ENCODE measurements at regions of chr17 and their contacts with region 1.

Region 1: GRCh38 chr17:75904749-75905521 is at the start of gene MRPL38:
- DNase-seq: peak; percentile 97
- ATAC-seq: peak; percentile 96
- H3K4me3 ChIP-seq: peak within 1 kb of the TSS; percentile 40 to 83 (median 79)
- H3K4me3 Mint-ChIP-seq: peak within 1 kb of the TSS; percentile 91
- H3K27ac ChIP-seq: peak within 1 kb of the TSS; percentile 79 to 83
- H3K27ac Mint-ChIP-seq: peak within 1 kb of the TSS; percentile 90
- H3K4me1 ChIP-seq: peaks cover 3 to 17% of the 10 kb centered on the region in 2 donors
- H3K4me1 Mint-ChIP-seq: peaks cover 8% of the 10 kb centered on the region
- H3K27me3 ChIP-seq: no peaks in the 10 kb centered on the region
- H3K27me3 Mint-ChIP-seq: no peaks in the 10 kb centered on the region
- CTCF ChIP-seq: peak; percentile 99
- total RNA-seq, gene MRPL38: 127 and 139 TPM in 2 replicates

Region 2: GRCh38 chr17:75784473-75785015 is 120.4 kb before region 1 on chr17 and contains the start of gene UNK:
- CTCF ChIA-PET with region 1: interaction called, 4 read pairs
- POLR2A ChIA-PET with region 1: interaction called, 5 read pairs
- intact Hi-C with region 1: loop called (anchors 1 kb)
- DNase-seq: peak; percentile 99
- ATAC-seq: peak; percentile 75
- H3K4me3 ChIP-seq: peak within 1 kb of the TSS; percentile 75 to 83 (median 81)
- H3K4me3 Mint-ChIP-seq: peak within 1 kb of the TSS; percentile 96
- H3K27ac ChIP-seq: peak within 1 kb of the TSS; percentile 100
- H3K27ac Mint-ChIP-seq: peak within 1 kb of the TSS; percentile 100
- H3K4me1 ChIP-seq: peaks cover 42 to 49% of the 10 kb centered on the region in 2 donors
- H3K4me1 Mint-ChIP-seq: peaks cover 53% of the 10 kb centered on the region
- H3K27me3 ChIP-seq: no peaks in the 10 kb centered on the region
- H3K27me3 Mint-ChIP-seq: no peaks in the 10 kb centered on the region
- CTCF ChIP-seq: no peak
- total RNA-seq, gene UNK: 70.3 and 82.3 TPM in 2 replicates

Region 3: GRCh38 chr17:75827252-75828115 is 77.5 kb before region 1 on chr17:
- CTCF ChIA-PET with region 1: no interaction called
- POLR2A ChIA-PET with region 1: no interaction called
- intact Hi-C with region 1: no loop called
- DNase-seq: peak; percentile 79
- ATAC-seq: peak; percentile 83
- H3K4me3 ChIP-seq: peak overlapping the region in 4 of 5 experiments; percentile 27 to 47 (median 36)
- H3K4me3 Mint-ChIP-seq: peak overlapping the region; percentile 82
- H3K27ac ChIP-seq: peak overlapping the region; percentile 42 to 54
- H3K27ac Mint-ChIP-seq: peak overlapping the region; percentile 86
- H3K4me1 ChIP-seq: peaks cover 8 to 18% of the 10 kb centered on the region in 2 donors
- H3K4me1 Mint-ChIP-seq: peaks cover 18% of the 10 kb centered on the region
- H3K27me3 ChIP-seq: no peaks in the 10 kb centered on the region
- H3K27me3 Mint-ChIP-seq: no peaks in the 10 kb centered on the region
- CTCF ChIP-seq: peak; percentile 80

Region 4: DNA sequence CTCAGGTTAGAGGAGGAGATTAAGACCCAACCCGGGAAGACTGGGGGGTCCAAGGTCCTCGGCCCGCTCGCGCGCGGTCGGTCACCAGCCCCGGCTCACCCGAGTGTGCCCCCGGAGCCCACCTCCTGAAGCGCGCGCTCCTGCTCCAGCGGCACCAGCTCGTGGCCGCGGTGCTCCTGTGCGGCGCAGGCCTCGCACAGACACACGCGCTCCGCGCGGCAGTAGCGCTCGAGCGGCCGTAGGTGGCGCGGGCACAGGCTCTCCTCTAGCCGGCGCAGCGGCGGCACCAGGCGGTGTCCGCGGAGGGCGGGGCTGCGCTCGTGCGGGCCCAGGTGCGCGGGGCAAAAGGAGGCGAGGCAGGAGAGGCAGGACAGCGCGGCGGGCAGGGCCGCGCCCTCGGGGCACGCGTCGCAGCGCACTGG is 27.2 kb before region 1 on chr17:
- CTCF ChIA-PET with region 1: interaction called, 5 read pairs
- POLR2A ChIA-PET with region 1: interaction called, 13 read pairs
- intact Hi-C with region 1: loop called (anchors 2 kb)
- DNase-seq: peak; percentile 87
- ATAC-seq: peak; percentile 77
- H3K4me3 ChIP-seq: peak overlapping the region in 4 of 5 experiments; percentile 46 to 69 (median 52)
- H3K4me3 Mint-ChIP-seq: peak overlapping the region; percentile 90
- H3K27ac ChIP-seq: peak overlapping the region; percentile 44 to 55
- H3K27ac Mint-ChIP-seq: peak overlapping the region; percentile 91
- H3K4me1 ChIP-seq: peaks cover 30 to 39% of the 10 kb centered on the region in 2 donors
- H3K4me1 Mint-ChIP-seq: peaks cover 35% of the 10 kb centered on the region
- H3K27me3 ChIP-seq: peaks cover 0 to 7% (median 1%) of the 10 kb centered on the region in 4 experiments
- H3K27me3 Mint-ChIP-seq: peaks cover 4% of the 10 kb centered on the region
- CTCF ChIP-seq: peak; percentile 73

Region 5: DNA sequence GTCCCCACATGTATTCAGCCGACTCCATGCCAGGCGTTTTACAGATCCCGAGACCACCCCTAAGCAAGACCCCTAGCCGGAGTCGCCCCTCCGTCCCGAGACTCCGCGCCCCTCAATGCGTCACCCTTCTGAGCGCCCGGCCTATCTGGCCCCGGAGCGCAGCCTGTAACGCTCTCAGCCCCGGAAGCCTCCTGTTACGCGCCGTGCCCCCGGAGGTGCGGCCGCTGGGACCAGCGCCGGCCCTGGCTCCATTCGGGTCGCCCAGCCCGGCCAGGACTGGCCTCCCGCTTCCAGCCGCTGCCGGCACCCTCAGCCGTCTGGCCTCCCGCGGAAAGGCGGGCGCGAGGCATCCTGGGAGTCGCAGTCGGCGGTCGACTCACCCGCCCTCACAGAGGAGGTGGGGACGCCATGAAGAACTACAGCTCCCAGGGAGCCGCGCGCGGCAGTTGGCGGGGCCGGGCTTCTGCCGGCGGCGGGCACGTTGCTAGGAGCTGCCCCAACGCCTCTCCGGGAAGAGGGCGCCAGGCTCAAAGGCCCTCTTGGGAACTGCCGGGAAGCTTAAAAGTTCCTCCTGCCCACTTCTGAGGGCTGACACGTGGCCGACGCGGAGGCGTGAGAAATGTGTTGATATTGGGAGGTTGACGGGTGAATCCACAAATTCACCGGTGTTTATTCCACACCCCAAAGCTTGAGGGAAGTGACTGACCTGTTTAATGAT is 35.9 kb after region 1 on chr17 and contains the start of gene FBF1:
- CTCF ChIA-PET with region 1: interaction called, 4 read pairs
- POLR2A ChIA-PET with region 1: no interaction called
- intact Hi-C with region 1: loop called (anchors 1 kb)
- DNase-seq: peak; percentile 89
- ATAC-seq: peak; percentile 99
- H3K4me3 ChIP-seq: peak within 1 kb of the TSS; percentile 6 to 97 (median 81)
- H3K4me3 Mint-ChIP-seq: peak within 1 kb of the TSS; percentile 92
- H3K27ac ChIP-seq: peak within 1 kb of the TSS; percentile 47 to 82
- H3K27ac Mint-ChIP-seq: peak within 1 kb of the TSS; percentile 89
- H3K4me1 ChIP-seq: peaks cover 0 to 14% of the 10 kb centered on the region in 2 donors
- H3K4me1 Mint-ChIP-seq: peaks cover 12% of the 10 kb centered on the region
- H3K27me3 ChIP-seq: no peaks in the 10 kb centered on the region
- H3K27me3 Mint-ChIP-seq: no peaks in the 10 kb centered on the region
- CTCF ChIP-seq: no peak
- total RNA-seq, gene FBF1: 27.0 and 31.5 TPM in 2 replicates

Region 6: DNA sequence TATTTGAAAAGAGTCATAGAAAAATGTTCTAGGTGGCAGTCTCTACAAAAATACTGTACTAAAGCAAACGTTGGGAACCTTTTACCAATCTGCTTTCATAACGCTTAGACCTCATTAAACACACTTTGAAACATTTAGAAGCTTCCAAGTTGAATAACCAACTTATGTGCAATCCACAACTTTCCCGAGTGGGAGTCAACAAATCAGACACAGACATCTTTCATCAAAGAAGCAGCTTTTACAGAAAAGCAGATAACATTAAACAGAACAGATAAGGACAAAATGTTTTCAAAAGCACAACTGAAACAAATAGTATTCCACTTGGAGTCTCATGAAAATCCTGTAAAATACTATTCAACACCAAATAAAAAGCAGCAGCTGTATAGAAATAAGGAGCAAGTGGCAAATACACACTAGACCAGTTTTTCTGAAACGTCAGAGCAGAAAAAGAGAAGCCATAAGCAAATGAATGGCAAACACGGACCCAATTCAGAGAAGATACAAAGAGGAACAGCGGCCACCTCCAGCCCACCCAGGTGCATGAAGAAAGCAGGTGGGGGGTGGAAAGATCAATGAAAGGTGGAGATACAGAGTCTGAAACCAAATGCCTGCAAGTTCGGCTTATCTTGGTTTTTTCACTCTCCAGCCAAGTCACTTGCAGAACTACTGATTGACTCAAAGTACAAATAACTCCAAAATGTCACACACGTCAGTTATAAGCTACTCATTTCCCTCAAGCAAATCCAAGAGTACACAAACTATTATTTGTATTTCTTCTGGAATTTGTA is 54.3 kb after region 1 on chr17:
- CTCF ChIA-PET with region 1: no interaction called
- POLR2A ChIA-PET with region 1: no interaction called
- intact Hi-C with region 1: no loop called
- DNase-seq: no peak
- ATAC-seq: no peak
- H3K4me3 ChIP-seq: no peak overlapping the region
- H3K4me3 Mint-ChIP-seq: no peak overlapping the region
- H3K27ac ChIP-seq: no peak overlapping the region
- H3K27ac Mint-ChIP-seq: no peak overlapping the region
- H3K4me1 ChIP-seq: peaks cover 0 to 4% of the 10 kb centered on the region in 2 donors
- H3K4me1 Mint-ChIP-seq: peaks cover 3% of the 10 kb centered on the region
- H3K27me3 ChIP-seq: no peaks in the 10 kb centered on the region
- H3K27me3 Mint-ChIP-seq: no peaks in the 10 kb centered on the region
- CTCF ChIP-seq: no peak

Region 7: GRCh38 chr17:75978938-75979704 is 74.2 kb after region 1 on chr17 and contains the starts of genes ACOX1 and TEN1:
- CTCF ChIA-PET with region 1: interaction called, 6 read pairs
- POLR2A ChIA-PET with region 1: no interaction called
- intact Hi-C with region 1: loop called (anchors 1 kb)
- DNase-seq: peak; percentile 98
- ATAC-seq: peak; percentile 93
- H3K4me3 ChIP-seq: peak within 1 kb of the TSS; percentile 73 to 100 (median 87)
- H3K4me3 Mint-ChIP-seq: peak within 1 kb of the TSS; percentile 94
- H3K27ac ChIP-seq: peak within 1 kb of the TSS; percentile 92 to 97
- H3K27ac Mint-ChIP-seq: peak within 1 kb of the TSS; percentile 98
- H3K4me1 ChIP-seq: peaks cover 9 to 19% of the 10 kb centered on the region in 2 donors
- H3K4me1 Mint-ChIP-seq: peaks cover 44% of the 10 kb centered on the region
- H3K27me3 ChIP-seq: no peaks in the 10 kb centered on the region
- H3K27me3 Mint-ChIP-seq: no peaks in the 10 kb centered on the region
- CTCF ChIP-seq: peak; percentile 35
- total RNA-seq, gene ACOX1: 31.2 and 38.8 TPM in 2 replicates
- total RNA-seq, gene TEN1: 19.8 and 25.5 TPM in 2 replicates

Region 8: DNA sequence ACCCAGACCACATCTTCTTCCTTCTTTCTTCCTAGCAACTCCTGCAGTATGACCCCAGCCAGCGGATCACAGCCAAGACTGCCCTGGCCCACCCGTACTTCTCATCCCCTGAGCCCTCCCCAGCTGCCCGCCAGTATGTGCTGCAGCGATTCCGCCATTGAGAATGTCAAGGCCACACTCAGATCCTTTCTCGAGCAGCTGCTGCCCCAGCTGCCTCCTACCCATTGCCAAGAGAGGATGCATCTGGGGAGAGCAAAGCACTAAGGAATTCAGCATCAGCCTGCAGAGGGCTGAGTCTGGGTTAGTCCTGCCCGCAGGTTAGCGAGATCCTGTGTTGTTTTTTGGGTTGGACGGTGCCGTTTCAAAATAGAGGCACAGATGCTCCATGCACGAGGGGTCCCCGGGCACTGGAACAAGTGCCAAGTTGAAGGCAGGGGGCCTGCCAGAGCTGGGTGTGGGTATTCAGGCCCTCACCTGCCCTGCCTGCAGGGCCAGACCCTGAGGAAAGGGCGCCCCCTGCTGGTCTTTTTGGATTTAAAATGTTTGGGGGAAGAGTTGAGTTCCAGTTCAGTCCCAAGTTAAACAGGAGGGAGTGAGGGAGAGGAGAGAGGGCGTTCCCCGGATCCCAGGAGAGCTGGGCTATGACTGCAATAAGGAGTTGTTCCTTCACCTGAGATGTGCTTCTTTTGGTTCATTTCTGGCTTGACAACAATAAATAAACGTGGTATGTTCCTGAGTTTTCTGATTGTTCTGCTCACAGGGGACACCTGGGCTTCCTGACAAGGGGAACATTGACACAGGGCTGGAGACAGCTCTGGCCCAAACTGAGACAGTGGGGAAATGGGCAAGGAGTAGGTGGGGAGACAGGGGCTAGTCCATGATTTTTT is 100.6 kb after region 1 on chr17:
- CTCF ChIA-PET with region 1: interaction called, 66 read pairs
- POLR2A ChIA-PET with region 1: no interaction called
- intact Hi-C with region 1: no loop called
- DNase-seq: peak; percentile 85
- ATAC-seq: peak; percentile 80
- H3K4me3 ChIP-seq: no peak overlapping the region
- H3K4me3 Mint-ChIP-seq: no peak overlapping the region
- H3K27ac ChIP-seq: no peak overlapping the region
- H3K27ac Mint-ChIP-seq: peak overlapping the region; percentile 56
- H3K4me1 ChIP-seq: peaks cover 0 to 3% of the 10 kb centered on the region in 2 donors
- H3K4me1 Mint-ChIP-seq: no peaks in the 10 kb centered on the region
- H3K27me3 ChIP-seq: no peaks in the 10 kb centered on the region
- H3K27me3 Mint-ChIP-seq: no peaks in the 10 kb centered on the region
- CTCF ChIP-seq: peak; percentile 85

Region 9: DNA sequence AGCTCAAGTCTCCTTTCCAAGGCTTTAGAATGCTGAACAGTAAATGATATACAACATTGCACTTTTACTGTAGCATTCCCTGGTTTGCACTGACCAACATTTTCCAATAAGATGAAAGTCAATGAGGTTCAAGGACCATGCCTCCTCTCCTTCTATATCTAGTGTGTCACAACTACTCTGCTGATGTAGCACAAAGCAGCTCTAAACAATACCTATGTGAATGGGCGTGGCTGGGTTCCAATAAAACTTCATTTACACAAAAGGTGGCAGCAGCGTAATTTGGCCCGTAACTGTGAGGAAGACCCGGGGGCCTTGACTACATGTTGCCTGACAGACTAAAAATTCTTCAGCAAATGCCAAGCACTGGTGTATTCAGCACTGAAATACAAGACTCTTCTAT is 160.8 kb after region 1 on chr17:
- CTCF ChIA-PET with region 1: no interaction called
- POLR2A ChIA-PET with region 1: no interaction called
- intact Hi-C with region 1: no loop called
- DNase-seq: no peak
- ATAC-seq: no peak
- H3K4me3 ChIP-seq: no peak overlapping the region
- H3K4me3 Mint-ChIP-seq: no peak overlapping the region
- H3K27ac ChIP-seq: no peak overlapping the region
- H3K27ac Mint-ChIP-seq: peak overlapping the region; percentile 20
- H3K4me1 ChIP-seq: peaks cover 2 to 4% of the 10 kb centered on the region in 2 donors
- H3K4me1 Mint-ChIP-seq: peaks cover 15% of the 10 kb centered on the region
- H3K27me3 ChIP-seq: no peaks in the 10 kb centered on the region
- H3K27me3 Mint-ChIP-seq: no peaks in the 10 kb centered on the region
- CTCF ChIP-seq: no peak

Measured in B cell (primary cell).